MCF 10A (cell line): ENCODE measurements at regions of chr18 and their contacts with region 1.

Region 1: DNA sequence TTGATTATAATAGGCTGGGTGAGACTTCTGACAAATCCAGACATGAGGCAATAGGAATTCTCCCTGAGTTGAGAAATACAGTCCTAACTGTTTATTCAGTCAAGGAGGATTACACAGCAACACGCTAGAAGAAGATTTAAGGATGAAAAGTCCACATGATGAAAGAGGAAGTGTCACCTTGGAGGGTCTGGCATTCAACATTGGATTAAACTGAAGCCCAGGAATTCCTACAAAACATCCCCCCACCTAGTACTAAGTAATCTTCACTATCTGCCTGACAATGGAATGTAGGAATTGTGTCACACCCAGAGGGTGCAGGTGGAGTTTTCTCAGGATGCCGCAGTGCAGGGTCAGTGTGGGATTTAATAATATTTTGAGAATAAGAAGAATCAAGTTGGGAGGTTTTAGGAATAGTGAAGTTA is 142.4 kb downstream of the SOCS6 start:
- DNase-seq: peak; percentile 82
- H3K4me3 Mint-ChIP-seq: no peak overlapping the region
- H3K27ac Mint-ChIP-seq: peak overlapping the region; percentile 43
- H3K4me1 Mint-ChIP-seq: peaks cover 7% of the 10 kb centered on the region
- H3K27me3 Mint-ChIP-seq: no peaks in the 10 kb centered on the region
- CTCF ChIP-seq: no peak

Region 2: GRCh38 chr18:69787825-69788547 is 643.2 kb before region 1 on chr18:
- CTCF ChIA-PET with region 1: no interaction called
- POLR2A ChIA-PET with region 1: no interaction called
- intact Hi-C with region 1: no loop called
- DNase-seq: peak; percentile 43
- H3K4me3 Mint-ChIP-seq: no peak overlapping the region
- H3K27ac Mint-ChIP-seq: peak overlapping the region; percentile 31
- H3K4me1 Mint-ChIP-seq: peaks cover 6% of the 10 kb centered on the region
- H3K27me3 Mint-ChIP-seq: no peaks in the 10 kb centered on the region
- CTCF ChIP-seq: no peak

Region 3: GRCh38 chr18:70172225-70172624 is 259.0 kb before region 1 on chr18:
- CTCF ChIA-PET with region 1: interaction called, 21 read pairs
- POLR2A ChIA-PET with region 1: no interaction called
- intact Hi-C with region 1: no loop called
- DNase-seq: peak; percentile 4
- H3K4me3 Mint-ChIP-seq: no peak overlapping the region
- H3K27ac Mint-ChIP-seq: no peak overlapping the region
- H3K4me1 Mint-ChIP-seq: no peaks in the 10 kb centered on the region
- H3K27me3 Mint-ChIP-seq: no peaks in the 10 kb centered on the region
- CTCF ChIP-seq: peak; percentile 27

Region 4: DNA sequence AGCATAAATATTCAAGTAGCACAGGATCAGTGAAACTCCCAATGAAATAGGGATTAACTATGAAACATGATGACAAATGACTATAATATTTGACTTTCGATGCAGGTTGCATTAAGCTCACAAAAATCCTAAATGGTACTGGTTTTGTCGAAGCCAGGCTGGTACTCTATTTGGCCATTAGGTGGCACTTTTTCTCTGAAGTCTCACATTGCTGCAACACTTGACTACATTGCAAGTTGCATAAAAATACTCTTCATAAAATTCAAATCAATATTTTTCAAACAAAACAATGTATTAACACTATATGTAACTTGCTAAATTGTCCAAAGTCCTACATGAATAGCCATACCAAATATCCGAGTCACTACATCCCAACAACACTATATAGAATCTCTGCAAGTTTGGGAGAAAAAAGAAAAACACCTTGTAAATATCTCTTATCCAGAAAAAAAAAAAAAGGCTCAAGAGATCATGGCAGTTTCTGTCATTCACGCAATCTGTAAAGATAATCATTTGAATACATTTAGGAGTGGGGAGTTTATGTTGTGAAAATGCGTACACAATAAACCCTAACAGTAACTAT is 235.3 kb before region 1 on chr18:
- CTCF ChIA-PET with region 1: interaction called, 323 read pairs
- POLR2A ChIA-PET with region 1: interaction called, 5 read pairs
- intact Hi-C with region 1: loop called (anchors 1 kb)
- DNase-seq: peak; percentile 63
- H3K4me3 Mint-ChIP-seq: no peak overlapping the region
- H3K27ac Mint-ChIP-seq: no peak overlapping the region
- H3K4me1 Mint-ChIP-seq: no peaks in the 10 kb centered on the region
- H3K27me3 Mint-ChIP-seq: no peaks in the 10 kb centered on the region
- CTCF ChIP-seq: peak; percentile 78

Region 5: GRCh38 chr18:70220628-70221027 is 210.6 kb before region 1 on chr18:
- CTCF ChIA-PET with region 1: interaction called, 13 read pairs
- POLR2A ChIA-PET with region 1: no interaction called
- intact Hi-C with region 1: no loop called
- DNase-seq: no peak
- H3K4me3 Mint-ChIP-seq: no peak overlapping the region
- H3K27ac Mint-ChIP-seq: no peak overlapping the region
- H3K4me1 Mint-ChIP-seq: no peaks in the 10 kb centered on the region
- H3K27me3 Mint-ChIP-seq: peaks cover 40% of the 10 kb centered on the region
- CTCF ChIP-seq: no peak

Region 6: DNA sequence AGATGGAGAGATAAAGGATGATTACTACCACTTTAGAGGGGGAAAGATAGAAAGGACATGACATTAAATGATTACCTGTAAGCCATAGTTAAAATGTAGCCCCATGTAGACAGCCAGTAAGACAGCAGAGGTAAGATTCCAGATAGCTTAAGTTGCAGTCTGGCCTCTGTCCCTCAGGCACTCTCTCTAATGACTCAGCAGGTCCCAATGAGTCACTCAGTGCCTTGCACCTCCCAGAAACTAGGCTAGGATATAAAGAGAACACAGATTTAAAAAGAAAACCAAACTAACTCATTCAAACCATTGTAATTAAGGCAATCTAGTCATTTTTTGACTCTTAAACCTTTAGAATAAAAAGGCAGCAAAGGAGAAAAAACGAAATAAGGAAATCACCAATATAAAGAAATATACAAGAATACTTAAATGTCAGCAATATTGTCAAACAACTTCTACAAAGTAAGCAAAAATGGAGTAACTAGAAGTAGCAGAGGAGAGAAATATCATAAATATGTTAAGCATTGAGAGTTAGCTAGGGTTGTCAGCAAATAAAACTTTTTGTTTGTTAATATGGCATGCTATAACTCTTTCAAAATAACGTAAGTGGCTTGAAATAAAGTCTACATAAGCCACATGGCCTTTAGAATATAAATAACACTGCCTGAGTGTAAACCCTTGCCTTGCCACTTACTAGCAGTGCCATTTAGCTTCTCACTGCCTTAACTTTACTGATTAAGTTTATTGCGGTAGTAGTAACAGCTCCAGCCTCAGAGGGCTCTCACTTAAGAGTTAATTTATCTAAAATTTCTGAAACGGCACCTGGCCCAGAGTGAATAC is 93.9 kb before region 1 on chr18:
- CTCF ChIA-PET with region 1: interaction called, 14 read pairs
- POLR2A ChIA-PET with region 1: no interaction called
- intact Hi-C with region 1: loop called (anchors 1 kb)
- DNase-seq: peak; percentile 95
- H3K4me3 Mint-ChIP-seq: peak overlapping the region; percentile 1
- H3K27ac Mint-ChIP-seq: peak overlapping the region; percentile 90
- H3K4me1 Mint-ChIP-seq: peaks cover 26% of the 10 kb centered on the region
- H3K27me3 Mint-ChIP-seq: no peaks in the 10 kb centered on the region
- CTCF ChIP-seq: no peak

Region 7: DNA sequence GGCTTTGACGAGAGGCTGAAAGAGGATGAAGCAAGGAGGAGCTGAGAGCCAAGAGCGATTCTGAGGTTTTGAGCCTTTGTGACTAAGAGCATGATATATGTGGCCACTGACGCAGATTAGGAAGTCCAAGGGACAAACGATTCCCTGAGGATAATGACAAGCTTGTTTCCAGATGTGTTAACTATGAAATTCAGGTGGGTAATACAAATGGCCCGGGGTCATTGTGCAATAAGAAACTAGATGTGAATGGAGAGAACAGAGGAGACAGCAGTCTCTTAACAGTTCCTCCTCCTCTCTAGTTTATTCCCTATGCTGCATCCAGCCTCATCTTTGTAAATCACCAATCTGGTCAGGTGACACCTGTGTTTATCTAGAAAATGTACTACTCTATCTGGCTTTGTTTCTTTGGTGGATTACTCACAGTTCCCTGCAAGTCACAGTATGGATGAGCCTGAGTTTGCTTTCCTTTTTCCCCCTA is 58.1 kb before region 1 on chr18:
- CTCF ChIA-PET with region 1: interaction called, 11 read pairs
- POLR2A ChIA-PET with region 1: no interaction called
- intact Hi-C with region 1: no loop called
- DNase-seq: peak; percentile 95
- H3K4me3 Mint-ChIP-seq: peak overlapping the region; percentile 11
- H3K27ac Mint-ChIP-seq: peak overlapping the region; percentile 46
- H3K4me1 Mint-ChIP-seq: peaks cover 40% of the 10 kb centered on the region
- H3K27me3 Mint-ChIP-seq: no peaks in the 10 kb centered on the region
- CTCF ChIP-seq: no peak

Region 8: DNA sequence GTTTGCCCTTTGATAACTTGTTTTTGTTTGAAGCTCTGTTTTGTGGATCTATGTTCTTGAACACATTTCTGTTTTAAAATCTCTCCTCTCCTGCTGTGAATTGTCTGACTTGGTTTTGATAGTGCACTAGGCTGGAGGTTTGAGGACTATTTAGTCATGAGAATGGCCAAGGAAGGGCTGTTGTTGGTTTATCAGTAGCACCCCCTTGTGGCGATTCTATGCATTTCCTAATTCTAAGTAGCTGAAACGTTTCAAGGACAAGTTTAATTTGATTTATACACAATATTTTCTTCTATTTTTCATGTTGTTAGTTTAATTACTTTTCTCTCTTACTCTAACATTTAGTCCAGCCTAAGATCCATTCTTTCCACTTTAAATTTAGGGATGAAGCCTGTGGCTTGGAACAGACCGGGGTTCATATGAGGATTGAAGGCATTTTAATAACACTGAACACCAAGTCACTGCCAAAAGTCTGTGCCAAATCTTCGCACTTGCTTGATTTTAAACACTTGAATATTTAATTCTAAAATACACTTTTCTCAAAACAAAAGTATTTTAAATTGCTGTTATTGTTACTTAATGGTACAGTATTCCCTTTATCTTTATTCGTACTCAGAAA is 23.6 kb after region 1 on chr18:
- CTCF ChIA-PET with region 1: interaction called, 122 read pairs
- POLR2A ChIA-PET with region 1: no interaction called
- intact Hi-C with region 1: no loop called
- DNase-seq: peak; percentile 78
- H3K4me3 Mint-ChIP-seq: no peak overlapping the region
- H3K27ac Mint-ChIP-seq: no peak overlapping the region
- H3K4me1 Mint-ChIP-seq: no peaks in the 10 kb centered on the region
- H3K27me3 Mint-ChIP-seq: no peaks in the 10 kb centered on the region
- CTCF ChIP-seq: peak; percentile 77